ENCODE measurements at regions of chr2 and their contacts with region 1.

Region 1: GRCh38 chr2:116859708-116860107 is 954.8 kb upstream of the DDX18 start:
- DNase-seq: no peak
- ATAC-seq: no peak
- H3K4me3 ChIP-seq: no peak overlapping the region
- H3K27ac ChIP-seq: no peak overlapping the region
- H3K4me1 ChIP-seq: no peaks in the 10 kb centered on the region
- H3K27me3 ChIP-seq: no peaks in the 10 kb centered on the region
- CTCF ChIP-seq: no peak
- EP300 ChIP-seq: no peak
- POLR2A ChIP-seq: no peak
- RAD21 ChIP-seq: no peak

Region 2: DNA sequence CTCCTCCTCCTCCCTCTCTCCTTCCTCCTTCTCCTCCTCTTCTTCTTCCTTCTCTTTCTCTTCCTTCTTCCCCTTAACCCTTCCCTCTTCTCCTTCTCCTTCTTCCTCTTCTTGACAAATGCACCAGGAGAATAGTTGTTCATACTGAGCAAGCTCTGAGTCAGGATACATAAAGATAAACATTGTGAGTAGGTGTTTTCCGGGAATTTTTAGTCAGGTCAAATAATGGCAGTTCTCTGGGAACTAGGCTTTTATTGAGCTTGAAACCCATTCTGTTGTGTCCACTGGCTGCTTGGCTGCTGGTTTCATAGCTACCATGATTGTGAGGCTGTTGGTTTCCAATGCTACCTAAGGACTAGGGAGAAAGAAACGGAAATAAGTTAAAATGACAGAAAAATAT is 189.9 kb before region 1 on chr2:
- CTCF ChIA-PET with region 1: no interaction called
- POLR2A ChIA-PET with region 1: no interaction called
- in situ Hi-C with region 1: no loop called
- intact Hi-C with region 1: no loop called
- DNase-seq: no peak
- ATAC-seq: no peak
- H3K4me3 ChIP-seq: no peak overlapping the region
- H3K27ac ChIP-seq: no peak overlapping the region
- H3K4me1 ChIP-seq: no peaks in the 10 kb centered on the region
- H3K27me3 ChIP-seq: no peaks in the 10 kb centered on the region
- CTCF ChIP-seq: no peak
- EP300 ChIP-seq: no peak
- POLR2A ChIP-seq: no peak
- RAD21 ChIP-seq: no peak

Region 3: GRCh38 chr2:116787848-116788247 is 71.9 kb before region 1 on chr2:
- CTCF ChIA-PET with region 1: no interaction called
- POLR2A ChIA-PET with region 1: no interaction called
- in situ Hi-C with region 1: no loop called
- intact Hi-C with region 1: loop called (anchors 2 kb)
- DNase-seq: no peak
- ATAC-seq: no peak
- H3K4me3 ChIP-seq: no peak overlapping the region
- H3K27ac ChIP-seq: no peak overlapping the region
- H3K4me1 ChIP-seq: no peaks in the 10 kb centered on the region
- H3K27me3 ChIP-seq: no peaks in the 10 kb centered on the region
- CTCF ChIP-seq: no peak
- EP300 ChIP-seq: no peak
- POLR2A ChIP-seq: no peak
- RAD21 ChIP-seq: no peak

Measured in K562 (cell line).